Sciatic nerve (tissue), 2 donors: ENCODE measurements at regions of chr11 and their contacts with region 1.

Region 1: GRCh38 chr11:1760351-1761109 is 3.2 kb downstream of the CTSD start:
- DNase-seq: peak; percentile 91
- ATAC-seq: peak; percentile 82

Region 2: GRCh38 chr11:1628506-1629325 is 131.8 kb before region 1 on chr11:
- intact Hi-C with region 1: no loop called
- DNase-seq: peak; percentile 71
- ATAC-seq: peak; percentile 78

Region 3: DNA sequence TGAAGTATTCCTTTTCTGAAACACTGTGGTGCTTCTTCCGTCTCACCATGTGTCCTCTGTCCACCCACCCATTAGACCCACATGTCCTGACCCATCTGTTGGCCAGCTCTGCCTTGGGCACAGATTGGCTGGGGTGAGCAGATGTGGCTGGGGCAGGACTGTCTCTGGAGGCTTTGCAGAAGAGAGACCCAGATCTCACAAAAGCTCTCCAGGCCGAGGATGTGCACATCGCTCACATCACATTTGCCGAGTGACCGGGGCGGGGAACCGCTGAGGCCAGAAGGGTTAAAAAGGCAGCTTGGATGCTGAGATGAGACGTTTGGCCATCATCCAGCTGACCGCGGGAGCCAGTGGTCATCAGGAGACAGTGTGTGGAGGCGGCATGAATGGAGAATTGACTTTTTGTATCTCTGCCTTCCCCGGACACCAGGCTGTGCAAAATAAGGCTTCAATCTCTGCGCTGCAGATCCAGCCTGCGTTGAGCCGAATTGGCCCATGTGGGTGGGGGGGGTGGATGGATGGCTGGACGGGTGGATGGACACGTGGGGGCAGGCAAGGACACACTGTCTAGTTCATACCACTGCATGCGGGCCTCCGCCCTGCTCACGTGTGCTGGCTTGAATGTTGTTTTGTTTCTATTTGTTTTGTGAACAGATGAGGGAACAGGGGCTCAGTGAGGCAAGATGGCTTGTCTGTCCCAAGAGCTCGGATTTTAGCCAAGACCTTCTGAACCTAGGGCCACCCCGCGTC is 16.2 kb before region 1 on chr11:
- intact Hi-C with region 1: no loop called
- DNase-seq: peak; percentile 62
- ATAC-seq: peak; percentile 72

Region 4: GRCh38 chr11:1773711-1774550 is 13.4 kb after region 1 on chr11:
- intact Hi-C with region 1: loop called (anchors 2 kb)
- DNase-seq: peak; percentile 42
- ATAC-seq: no peak